PC-9 (cell line): ENCODE measurements at regions of chr17 and their contacts with region 1.

Region 1: DNA sequence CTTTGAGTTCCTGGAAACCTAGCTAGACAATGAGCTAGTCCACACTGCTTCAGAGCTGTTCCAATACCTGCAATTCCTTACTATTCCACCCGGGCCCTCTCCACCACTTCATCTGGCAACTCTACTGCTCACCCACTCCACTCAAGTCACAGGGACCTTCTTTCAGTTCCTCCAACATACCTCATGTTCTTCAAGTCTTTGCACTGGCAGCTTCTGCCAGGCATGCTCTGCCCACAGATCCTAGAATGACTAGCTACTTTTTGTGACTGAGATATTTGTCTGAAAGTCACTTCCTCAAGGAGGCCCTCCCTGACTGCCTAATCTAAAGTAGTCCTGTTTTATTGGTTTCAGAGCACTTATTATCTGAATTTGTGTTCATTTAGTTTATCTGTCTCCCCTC is 86.4 kb downstream of the TEX14 start:
- DNase-seq: no peak
- H3K4me3 ChIP-seq: no peak overlapping the region
- H3K27ac ChIP-seq: no peak overlapping the region
- H3K4me1 ChIP-seq: no peaks in the 10 kb centered on the region
- H3K27me3 ChIP-seq: no peaks in the 10 kb centered on the region
- CTCF ChIP-seq: no peak

Region 2: DNA sequence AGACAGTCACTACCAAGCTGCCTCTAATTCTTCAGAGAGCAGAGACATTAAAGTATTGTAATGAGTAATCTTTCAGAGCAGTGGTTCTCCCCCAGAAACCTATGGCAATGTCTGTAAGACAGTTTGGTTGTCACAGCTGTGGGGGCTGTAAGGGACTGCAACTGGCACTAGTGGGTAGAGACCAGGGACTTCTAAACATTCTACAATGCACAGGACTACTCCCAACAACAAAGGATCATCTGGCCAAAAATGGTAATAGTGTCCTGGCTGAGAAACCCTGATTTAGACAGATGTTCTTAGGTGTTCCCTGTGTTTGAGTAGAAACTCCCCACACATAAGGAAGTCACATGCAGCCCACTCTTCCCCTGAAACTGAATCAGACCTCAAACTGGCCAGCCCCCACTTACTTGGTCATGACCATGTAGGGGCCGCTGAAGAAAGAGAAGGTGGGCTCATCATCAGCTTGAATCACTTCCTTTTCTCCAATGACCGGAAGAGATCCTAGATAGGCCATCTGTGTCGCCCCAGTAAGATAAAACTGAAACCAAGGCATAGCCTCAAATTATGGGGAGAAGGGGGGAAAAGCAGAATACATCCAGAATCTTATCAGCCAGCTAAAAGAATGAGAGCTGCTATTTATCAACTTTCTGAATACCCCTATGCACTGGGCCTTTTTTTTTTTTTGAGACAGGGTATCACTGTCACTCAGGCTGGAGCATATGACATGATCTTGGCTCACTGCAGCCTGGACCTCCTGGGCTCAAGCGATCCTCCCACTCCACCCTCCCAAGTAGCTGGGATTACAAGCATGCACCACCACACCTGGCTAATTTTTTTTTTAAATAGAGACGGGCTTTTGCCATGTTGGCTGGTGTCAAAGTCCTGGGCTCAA is 10.5 kb after region 1 on chr17:
- CTCF ChIA-PET with region 1: no interaction called
- POLR2A ChIA-PET with region 1: interaction called, 12 read pairs
- intact Hi-C with region 1: no loop called
- DNase-seq: no peak
- H3K4me3 ChIP-seq: no peak overlapping the region
- H3K27ac ChIP-seq: no peak overlapping the region
- H3K4me1 ChIP-seq: no peaks in the 10 kb centered on the region
- H3K27me3 ChIP-seq: no peaks in the 10 kb centered on the region
- CTCF ChIP-seq: no peak

Region 3: DNA sequence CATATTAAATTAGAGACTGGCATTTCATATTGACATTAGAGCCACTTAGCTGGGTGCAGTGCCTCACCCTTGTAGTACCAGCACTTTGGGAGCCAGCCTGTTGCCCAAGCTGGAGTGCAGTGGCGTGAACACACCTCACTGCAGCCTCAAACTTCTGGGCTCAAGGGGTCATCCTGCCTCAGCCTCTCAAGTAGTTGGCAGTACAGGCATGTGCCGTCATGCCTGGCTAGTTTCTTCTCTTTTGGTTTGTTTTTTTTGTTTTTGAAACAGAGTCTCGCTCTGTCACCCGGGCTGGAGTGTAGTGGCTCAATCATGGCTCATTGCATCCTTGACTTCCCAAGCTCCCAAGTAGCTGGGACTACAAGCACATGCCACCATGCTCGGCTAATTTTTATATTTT is 158.9 kb after region 1 on chr17:
- CTCF ChIA-PET with region 1: no interaction called
- POLR2A ChIA-PET with region 1: no interaction called
- intact Hi-C with region 1: no loop called
- DNase-seq: no peak
- H3K4me3 ChIP-seq: no peak overlapping the region
- H3K27ac ChIP-seq: no peak overlapping the region
- H3K4me1 ChIP-seq: no peaks in the 10 kb centered on the region
- H3K27me3 ChIP-seq: peaks cover 11% of the 10 kb centered on the region
- CTCF ChIP-seq: no peak